Dendritic cell treated with granulocyte-macrophage colony-stimulating factor and Interleukin-4, amounts not matched to agents 40 ng/mL and 50 ng/mL, for 4 days (primary cell): ENCODE measurements at regions of chr3 and their contacts with region 1.

Region 1: GRCh38 chr3:139519998-139520737 is 19.4 kb downstream of the RBP1 start:
- H3K4me3 Mint-ChIP-seq: no peak overlapping the region
- H3K27ac Mint-ChIP-seq: peak overlapping the region; percentile 81
- H3K4me1 Mint-ChIP-seq: peaks cover 27% of the 10 kb centered on the region
- H3K27me3 Mint-ChIP-seq: peaks cover 1% of the 10 kb centered on the region

Region 2: DNA sequence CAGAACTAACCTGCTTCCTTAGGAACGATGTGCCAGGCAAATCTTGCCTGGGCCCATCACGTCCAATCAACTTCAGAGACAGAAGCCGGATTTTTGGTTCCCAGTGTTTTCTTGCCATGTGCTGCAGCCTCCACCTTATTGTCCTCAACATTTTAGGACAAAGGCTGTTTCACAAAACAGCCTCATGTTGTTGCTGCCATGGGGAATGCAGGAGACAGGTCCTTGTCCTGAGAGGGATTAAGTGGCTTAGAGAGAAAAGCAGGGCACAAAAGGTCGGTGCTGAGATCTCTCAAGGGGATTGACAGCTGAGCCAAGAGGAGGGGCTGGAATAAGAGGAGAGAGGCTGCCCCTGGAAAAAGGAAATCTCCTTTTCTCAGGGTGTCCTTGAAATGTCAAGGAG is 169.0 kb after region 1 on chr3:
- intact Hi-C with region 1: loop called (anchors 10 kb)
- H3K4me3 Mint-ChIP-seq: no peak overlapping the region
- H3K27ac Mint-ChIP-seq: peak overlapping the region; percentile 87
- H3K4me1 Mint-ChIP-seq: peaks cover 62% of the 10 kb centered on the region
- H3K27me3 Mint-ChIP-seq: peaks cover 4% of the 10 kb centered on the region

Region 3: GRCh38 chr3:140719841-140720614 is 1199.9 kb after region 1 on chr3:
- intact Hi-C with region 1: loop called (anchors 5 kb)
- H3K4me3 Mint-ChIP-seq: no peak overlapping the region
- H3K27ac Mint-ChIP-seq: no peak overlapping the region
- H3K4me1 Mint-ChIP-seq: peaks cover 28% of the 10 kb centered on the region
- H3K27me3 Mint-ChIP-seq: no peaks in the 10 kb centered on the region